Activated naive CD8-positive, alpha-beta T cell treated with anti-CD3 and anti-CD28 coated beads, Interleukin-2, amount 10 ng/mL, durations not matched to agents 7 days and 5 days (primary cell): ENCODE measurements at regions of chr3 and their contacts with region 1.

Region 1: GRCh38 chr3:151203051-151203420 is at the start of gene GPR171:
- DNase-seq: peak; percentile 59
- ATAC-seq: peak; percentile 67
- H3K4me3 Mint-ChIP-seq: peak within 1 kb of the TSS; percentile 88
- H3K27ac Mint-ChIP-seq: peak within 1 kb of the TSS; percentile 95
- H3K4me1 Mint-ChIP-seq: peaks cover 50% of the 10 kb centered on the region
- H3K27me3 Mint-ChIP-seq: no peaks in the 10 kb centered on the region
- total RNA-seq, gene GPR171: 142 TPM

Region 2: GRCh38 chr3:151171145-151171757 is 31.8 kb before region 1 on chr3:
- POLR2A ChIA-PET with region 1: interaction called, 20 read pairs
- DNase-seq: peak; percentile 44
- ATAC-seq: peak; percentile 89
- H3K4me3 Mint-ChIP-seq: peak overlapping the region; percentile 71
- H3K27ac Mint-ChIP-seq: peak overlapping the region; percentile 89
- H3K4me1 Mint-ChIP-seq: peaks cover 45% of the 10 kb centered on the region
- H3K27me3 Mint-ChIP-seq: no peaks in the 10 kb centered on the region

Region 3: DNA sequence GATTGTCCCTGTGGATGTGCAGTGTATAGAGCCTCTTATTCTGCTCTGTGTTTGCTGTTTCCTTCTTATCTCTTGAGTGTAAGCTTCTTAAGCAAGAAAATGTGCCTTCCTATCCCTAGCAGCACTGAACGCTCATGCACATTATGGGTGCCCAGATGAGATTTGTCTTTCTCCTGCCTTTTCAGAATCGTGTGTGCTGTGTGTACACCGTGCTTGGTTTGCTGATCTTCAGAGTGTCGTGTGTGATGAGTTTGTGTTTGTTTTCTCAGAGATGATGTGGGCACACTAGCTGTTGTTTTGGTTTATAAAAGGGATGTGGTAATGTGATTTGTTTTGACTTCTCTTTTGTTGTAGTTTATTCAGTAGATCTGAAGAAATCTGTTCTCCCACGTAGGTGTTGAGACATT is 19.8 kb before region 1 on chr3:
- POLR2A ChIA-PET with region 1: interaction called, 10 read pairs
- DNase-seq: no peak
- ATAC-seq: peak; percentile 75
- H3K4me3 Mint-ChIP-seq: peak overlapping the region; percentile 78
- H3K27ac Mint-ChIP-seq: peak overlapping the region; percentile 81
- H3K4me1 Mint-ChIP-seq: peaks cover 36% of the 10 kb centered on the region
- H3K27me3 Mint-ChIP-seq: no peaks in the 10 kb centered on the region

Region 4: DNA sequence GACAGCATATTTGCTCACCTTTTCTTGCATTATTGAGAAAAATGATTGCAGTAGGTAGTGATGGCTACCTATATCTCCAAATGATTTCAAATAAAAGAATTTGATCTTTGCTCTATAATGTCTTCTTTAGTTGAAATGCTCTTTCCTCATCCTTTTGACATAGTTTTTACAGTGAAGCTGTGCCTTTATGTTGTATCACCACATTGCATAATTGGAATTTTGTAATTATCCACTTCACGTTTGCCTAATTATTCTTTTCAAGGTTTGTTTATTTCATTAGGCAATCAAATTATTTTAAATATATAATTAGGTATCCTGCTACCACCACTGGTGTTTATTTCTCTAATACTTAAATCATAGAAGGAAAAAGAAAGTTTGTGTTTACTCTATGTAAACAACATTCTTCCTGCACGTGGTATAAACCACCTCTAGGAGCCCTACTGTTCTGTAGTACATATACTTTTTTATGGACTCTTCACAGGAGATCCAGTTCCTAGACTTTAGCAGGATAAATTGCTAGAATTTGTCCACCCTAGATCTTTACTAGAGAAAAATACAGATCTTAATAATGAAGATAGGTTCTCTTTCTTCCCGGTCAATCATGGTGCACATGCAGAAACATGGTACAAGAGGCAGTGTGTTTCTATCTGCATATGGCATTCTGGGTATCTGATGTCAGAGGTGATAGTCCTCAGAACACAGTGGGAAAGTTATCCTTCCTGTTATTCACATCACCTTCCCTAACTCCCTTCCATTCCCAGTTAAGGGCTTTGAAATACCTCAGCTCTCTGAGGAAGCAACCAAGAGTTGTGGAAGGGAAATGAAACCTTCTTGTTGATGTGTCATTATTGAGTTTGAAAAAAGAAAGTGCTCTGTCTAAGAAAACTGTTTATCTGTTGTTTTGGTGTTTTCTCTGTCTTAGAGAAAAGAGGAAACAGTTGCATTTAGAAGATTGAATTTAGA is 147.9 kb after region 1 on chr3:
- POLR2A ChIA-PET with region 1: no interaction called
- DNase-seq: no peak
- ATAC-seq: no peak
- H3K4me3 Mint-ChIP-seq: no peak overlapping the region
- H3K27ac Mint-ChIP-seq: no peak overlapping the region
- H3K4me1 Mint-ChIP-seq: peaks cover 7% of the 10 kb centered on the region
- H3K27me3 Mint-ChIP-seq: peaks cover 19% of the 10 kb centered on the region